ENCODE measurements at regions of chr1 and their contacts with region 1.

Region 1: DNA sequence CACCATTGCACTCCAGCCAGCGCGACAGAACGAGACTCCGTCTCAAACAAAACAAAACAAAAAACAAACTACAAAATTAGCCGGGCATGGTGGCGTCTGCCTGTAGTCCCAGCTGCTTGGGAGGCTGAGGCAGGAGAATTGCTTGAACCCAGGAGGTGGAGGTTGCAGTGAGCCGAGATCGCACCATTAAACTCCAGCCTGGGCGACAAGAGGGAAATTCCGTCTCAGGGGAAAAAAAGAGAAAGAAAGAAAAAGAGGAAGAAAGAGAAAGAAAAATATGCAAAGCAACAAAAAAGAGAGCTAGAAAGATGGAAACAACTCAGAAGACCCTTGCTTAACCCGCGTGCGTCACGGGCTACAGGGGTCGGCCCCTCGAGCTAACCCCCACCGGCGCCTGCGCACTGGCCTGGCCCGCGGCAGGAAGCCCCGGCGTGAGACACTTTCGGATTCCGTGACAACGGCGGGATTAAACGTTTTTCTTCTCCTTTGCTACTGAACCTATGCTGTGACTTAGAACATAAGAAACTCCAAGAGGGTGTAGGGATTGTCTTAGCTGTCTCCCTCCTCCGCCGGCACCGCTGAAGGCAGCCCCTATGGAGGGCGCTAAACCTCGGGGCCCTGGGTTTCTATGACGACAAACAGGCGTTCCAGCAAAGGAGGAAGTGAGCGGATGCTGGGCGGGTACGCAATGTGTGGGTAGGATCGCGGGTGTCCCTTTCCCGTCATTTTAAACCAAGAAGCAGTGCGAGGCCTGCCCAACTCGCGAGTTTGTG is at the start of gene AXDND1:
- DNase-seq: peak; percentile 80 to 91 (median 86)
- H3K4me3 ChIP-seq: peak within 1 kb of the TSS; percentile 68
- H3K27ac ChIP-seq: peak within 1 kb of the TSS; percentile 84 to 87
- H3K4me1 ChIP-seq: no peaks in the 10 kb centered on the region
- H3K27me3 ChIP-seq: no peaks in the 10 kb centered on the region
- CTCF ChIP-seq: no peak
- EP300 ChIP-seq: no peak
- POLR2A ChIP-seq: no peak
- total RNA-seq, gene AXDND1: 0.07 to 4.1 (median 0.15) TPM in 5 of 7 donors, not detected in the others

Region 2: GRCh38 chr1:178529364-178530036 is 836.0 kb before region 1 on chr1:
- intact Hi-C with region 1: loop called in 1 of 4 experiments (anchors 10 kb)
- DNase-seq: no peak
- H3K4me3 ChIP-seq: no peak overlapping the region
- H3K27ac ChIP-seq: no peak overlapping the region
- H3K4me1 ChIP-seq: no peaks in the 10 kb centered on the region
- H3K27me3 ChIP-seq: no peaks in the 10 kb centered on the region
- CTCF ChIP-seq: no peak
- EP300 ChIP-seq: no peak
- POLR2A ChIP-seq: no peak

Region 3: GRCh38 chr1:178942285-178943198 is 423.0 kb before region 1 on chr1:
- intact Hi-C with region 1: no loop called
- DNase-seq: peak in 1 of 5 donors; percentile 33
- H3K4me3 ChIP-seq: no peak overlapping the region
- H3K27ac ChIP-seq: no peak overlapping the region
- H3K4me1 ChIP-seq: peaks cover 18% of the 10 kb centered on the region
- H3K27me3 ChIP-seq: no peaks in the 10 kb centered on the region
- CTCF ChIP-seq: no peak
- EP300 ChIP-seq: no peak
- POLR2A ChIP-seq: no peak

Region 4: DNA sequence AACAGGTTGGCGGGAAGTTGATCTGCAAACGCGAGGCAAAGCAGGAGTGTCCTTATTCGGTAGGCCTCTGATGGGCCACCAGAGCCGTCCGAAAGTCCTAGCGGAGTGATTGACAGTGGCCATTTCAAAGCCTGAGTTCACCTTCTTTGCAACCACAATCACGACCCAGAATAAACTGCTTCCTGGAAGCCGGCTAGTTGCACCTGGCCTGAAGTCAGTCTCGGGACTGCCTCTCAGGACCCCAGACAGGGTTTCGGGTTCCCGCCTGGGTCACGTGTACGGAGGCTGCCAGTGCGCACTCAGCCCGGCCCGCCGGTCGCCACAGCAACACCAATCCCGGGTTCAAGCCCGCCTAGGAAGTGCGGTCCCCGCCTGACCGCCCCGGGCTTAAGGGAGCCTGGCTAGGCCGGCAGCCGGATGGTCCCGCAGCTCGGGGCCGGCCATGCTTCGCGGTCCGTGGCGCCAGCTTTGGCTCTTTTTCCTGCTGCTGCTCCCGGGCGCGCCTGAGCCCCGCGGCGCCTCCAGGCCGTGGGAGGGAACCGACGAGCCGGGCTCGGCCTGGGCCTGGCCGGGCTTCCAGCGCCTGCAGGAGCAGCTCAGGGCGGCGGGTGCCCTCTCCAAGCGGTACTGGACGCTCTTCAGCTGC is 283.7 kb before region 1 on chr1 and contains the start of gene TOR3A:
- intact Hi-C with region 1: loop called in 3 of 4 experiments (anchors 2 to 10 kb)
- DNase-seq: peak; percentile 88 to 93 (median 90)
- H3K4me3 ChIP-seq: peak within 1 kb of the TSS; percentile 95
- H3K27ac ChIP-seq: peak within 1 kb of the TSS; percentile 47 to 61
- H3K4me1 ChIP-seq: peaks cover 4% of the 10 kb centered on the region
- H3K27me3 ChIP-seq: no peaks in the 10 kb centered on the region
- CTCF ChIP-seq: peak in 1 of 3 donors; percentile 16
- EP300 ChIP-seq: no peak
- POLR2A ChIP-seq: peak; percentile 67
- total RNA-seq, gene TOR3A: 19.2 to 55.0 (median 26.7) TPM

Region 5: DNA sequence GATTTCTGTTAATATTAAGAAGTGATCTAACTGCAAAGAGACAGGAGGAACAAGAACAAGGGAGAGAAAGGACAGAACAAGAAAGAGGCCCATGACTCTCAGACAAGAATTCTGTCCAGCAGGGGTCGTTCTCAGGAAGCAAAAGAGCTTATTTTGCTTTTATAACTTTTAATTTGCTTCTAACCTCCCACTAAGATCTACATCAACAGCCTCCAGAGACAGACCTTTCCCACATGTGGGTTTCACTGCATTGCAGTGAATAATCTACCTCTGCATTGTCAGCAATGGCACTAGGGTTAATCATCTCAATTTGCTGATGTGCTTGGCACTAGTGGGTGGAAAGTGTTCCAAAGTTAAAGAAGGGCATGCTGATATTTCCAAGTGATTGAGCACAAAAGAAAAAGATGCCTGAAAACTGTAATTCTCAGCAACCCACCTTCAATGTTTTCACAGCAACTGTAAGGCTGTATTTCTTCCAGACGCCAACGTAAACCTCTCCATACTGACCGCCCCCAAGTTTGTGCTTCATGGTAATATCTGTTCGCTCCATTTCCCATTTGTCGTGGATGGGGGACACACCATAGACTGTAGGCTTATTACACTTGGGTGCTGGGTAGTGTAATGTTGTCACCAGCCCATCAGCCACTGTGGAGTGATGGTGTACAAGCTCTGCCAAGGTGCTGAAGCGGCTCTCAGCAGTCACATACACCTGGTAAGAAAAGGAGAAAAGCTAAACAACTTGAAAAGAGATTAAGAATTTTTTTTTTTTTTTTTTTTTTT is 244.2 kb before region 1 on chr1:
- intact Hi-C with region 1: loop called in 1 of 4 experiments (anchors 5 kb)
- DNase-seq: peak in 1 of 5 donors; percentile 48
- H3K4me3 ChIP-seq: no peak overlapping the region
- H3K27ac ChIP-seq: no peak overlapping the region
- H3K4me1 ChIP-seq: no peaks in the 10 kb centered on the region
- H3K27me3 ChIP-seq: no peaks in the 10 kb centered on the region
- CTCF ChIP-seq: peak; percentile 17 to 57 (median 45)
- EP300 ChIP-seq: no peak
- POLR2A ChIP-seq: no peak

Region 6: GRCh38 chr1:179247923-179248322 is 117.6 kb before region 1 on chr1:
- intact Hi-C with region 1: loop called in 1 of 4 experiments (anchors 5 kb)
- DNase-seq: no peak
- H3K4me3 ChIP-seq: no peak overlapping the region
- H3K27ac ChIP-seq: no peak overlapping the region
- H3K4me1 ChIP-seq: no peaks in the 10 kb centered on the region
- H3K27me3 ChIP-seq: no peaks in the 10 kb centered on the region
- CTCF ChIP-seq: no peak
- EP300 ChIP-seq: no peak
- POLR2A ChIP-seq: no peak

Region 7: DNA sequence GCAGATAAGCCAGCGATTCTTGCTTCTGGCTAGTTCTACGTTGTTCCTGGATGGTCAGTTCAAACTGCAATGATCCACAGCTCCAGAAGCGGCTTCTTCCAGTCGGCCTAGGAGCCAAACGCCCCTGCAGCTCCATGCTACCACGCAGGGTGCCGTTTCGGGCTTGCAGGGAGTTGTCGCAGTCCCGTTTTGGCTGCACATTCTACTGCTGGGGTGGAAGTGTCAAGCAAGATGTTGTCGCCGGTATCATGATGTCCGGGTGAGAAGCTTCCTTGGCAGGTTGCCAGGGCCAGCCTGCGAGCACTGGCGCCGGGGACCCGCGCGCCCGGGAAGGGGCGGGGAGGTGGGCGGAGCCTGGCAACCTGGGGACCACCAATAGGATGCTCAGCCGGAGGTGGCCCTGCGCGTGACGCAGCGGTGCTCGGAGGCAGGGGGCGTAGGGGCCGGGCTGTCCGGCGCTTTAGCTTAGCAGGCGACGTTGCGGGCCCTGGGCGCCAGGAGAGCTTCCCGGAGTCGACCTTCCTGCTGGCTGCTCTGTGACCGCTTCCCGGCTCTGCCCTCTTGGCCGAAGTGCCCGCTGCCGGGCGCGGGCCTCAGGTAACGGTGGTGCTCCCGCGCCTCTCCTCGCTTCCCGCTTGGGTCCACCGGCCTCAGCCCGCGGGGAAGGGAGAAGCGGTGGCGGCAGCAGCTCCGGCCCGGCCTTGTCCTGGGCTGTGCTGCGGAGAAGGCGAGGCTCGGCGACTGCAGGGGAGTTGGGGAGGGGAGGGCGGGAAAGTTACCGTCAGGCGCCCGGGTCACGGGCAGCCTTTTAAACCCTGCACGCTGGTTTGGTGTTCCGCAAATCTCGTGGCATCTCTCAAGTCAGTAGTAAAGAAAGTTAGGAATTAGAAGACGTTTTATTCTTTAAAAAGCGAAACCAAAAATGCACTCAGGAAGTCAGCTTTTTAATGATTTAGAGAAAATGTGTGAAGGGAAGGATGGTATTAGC is 71.9 kb before region 1 on chr1 and contains the start of gene SOAT1:
- intact Hi-C with region 1: loop called in 1 of 4 experiments (anchors 2 kb)
- DNase-seq: peak; percentile 94 to 96 (median 95)
- H3K4me3 ChIP-seq: peak within 1 kb of the TSS; percentile 71
- H3K27ac ChIP-seq: peak within 1 kb of the TSS; percentile 93 to 96
- H3K4me1 ChIP-seq: peaks cover 2% of the 10 kb centered on the region
- H3K27me3 ChIP-seq: no peaks in the 10 kb centered on the region
- CTCF ChIP-seq: peak in 1 of 3 donors; percentile 23
- EP300 ChIP-seq: no peak
- POLR2A ChIP-seq: peak; percentile 79
- total RNA-seq, gene SOAT1: 9.3 to 55.3 (median 35.8) TPM